MCF 10A (cell line): ENCODE measurements at regions of chr18 and their contacts with region 1.

Region 1: GRCh38 chr18:72700961-72701718 is 157.0 kb upstream of the CBLN2 start:
- DNase-seq: peak; percentile 40
- H3K4me3 Mint-ChIP-seq: no peak overlapping the region
- H3K27ac Mint-ChIP-seq: no peak overlapping the region
- H3K4me1 Mint-ChIP-seq: no peaks in the 10 kb centered on the region
- H3K27me3 Mint-ChIP-seq: no peaks in the 10 kb centered on the region
- CTCF ChIP-seq: peak; percentile 61

Region 2: GRCh38 chr18:73007195-73007914 is 306.2 kb after region 1 on chr18:
- CTCF ChIA-PET with region 1: no interaction called
- POLR2A ChIA-PET with region 1: no interaction called
- intact Hi-C with region 1: no loop called
- DNase-seq: peak; percentile 63
- H3K4me3 Mint-ChIP-seq: peak overlapping the region; percentile 2
- H3K27ac Mint-ChIP-seq: peak overlapping the region; percentile 77
- H3K4me1 Mint-ChIP-seq: peaks cover 30% of the 10 kb centered on the region
- H3K27me3 Mint-ChIP-seq: no peaks in the 10 kb centered on the region
- CTCF ChIP-seq: no peak

Region 3: DNA sequence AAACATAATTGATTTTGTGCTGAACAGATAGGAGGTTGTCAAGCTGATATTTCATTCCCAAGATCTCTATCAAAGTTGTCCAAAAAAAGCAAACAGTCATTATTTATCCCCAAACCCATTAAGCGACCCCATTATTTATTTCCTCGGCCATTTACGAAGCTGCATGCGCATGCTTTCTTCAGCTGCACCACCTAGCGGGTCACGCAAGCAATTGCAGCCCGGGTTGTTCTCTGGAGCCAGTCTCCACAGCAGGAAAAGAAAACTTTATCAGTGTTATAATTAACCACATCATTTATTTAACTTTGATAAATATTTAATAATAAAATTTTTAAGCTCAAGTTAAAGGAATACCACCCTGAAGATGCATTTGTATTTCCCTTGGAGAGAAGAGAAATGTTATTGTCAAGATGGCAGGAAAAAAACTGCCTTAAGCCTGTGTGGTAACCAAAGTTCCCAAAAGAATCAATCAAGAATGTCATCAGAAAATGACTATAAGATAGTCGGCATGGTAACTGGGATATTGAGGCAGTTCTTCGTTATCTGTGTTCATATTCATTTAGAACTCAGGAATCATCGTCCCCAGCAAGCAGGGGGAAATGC is 1141.8 kb after region 1 on chr18:
- CTCF ChIA-PET with region 1: interaction called, 3 read pairs
- POLR2A ChIA-PET with region 1: no interaction called
- intact Hi-C with region 1: loop called (anchors 2 kb)
- DNase-seq: peak; percentile 55
- H3K4me3 Mint-ChIP-seq: no peak overlapping the region
- H3K27ac Mint-ChIP-seq: peak overlapping the region; percentile 8
- H3K4me1 Mint-ChIP-seq: peaks cover 5% of the 10 kb centered on the region
- H3K27me3 Mint-ChIP-seq: no peaks in the 10 kb centered on the region
- CTCF ChIP-seq: peak; percentile 89